ENCODE measurements at regions of chr1 and their contacts with region 1.

Region 1: GRCh38 chr1:165597883-165598675 is 33.0 kb upstream of the MGST3 start:
- DNase-seq: peak; percentile 98
- ATAC-seq: peak; percentile 95
- H3K4me3 Mint-ChIP-seq: peak overlapping the region; percentile 84
- H3K27ac Mint-ChIP-seq: peak overlapping the region; percentile 92
- H3K4me1 Mint-ChIP-seq: peaks cover 33% of the 10 kb centered on the region
- H3K27me3 Mint-ChIP-seq: peaks cover 27% of the 10 kb centered on the region

Region 2: GRCh38 chr1:165257969-165258459 is 340.1 kb before region 1 on chr1:
- CTCF ChIA-PET with region 1: no interaction called
- POLR2A ChIA-PET with region 1: no interaction called
- intact Hi-C with region 1: loop called in 1 of 2 experiments (anchors 1 kb)
- DNase-seq: peak; percentile 73
- ATAC-seq: no peak
- H3K4me3 Mint-ChIP-seq: no peak overlapping the region
- H3K27ac Mint-ChIP-seq: no peak overlapping the region
- H3K4me1 Mint-ChIP-seq: no peaks in the 10 kb centered on the region
- H3K27me3 Mint-ChIP-seq: peaks cover 19% of the 10 kb centered on the region

Region 3: DNA sequence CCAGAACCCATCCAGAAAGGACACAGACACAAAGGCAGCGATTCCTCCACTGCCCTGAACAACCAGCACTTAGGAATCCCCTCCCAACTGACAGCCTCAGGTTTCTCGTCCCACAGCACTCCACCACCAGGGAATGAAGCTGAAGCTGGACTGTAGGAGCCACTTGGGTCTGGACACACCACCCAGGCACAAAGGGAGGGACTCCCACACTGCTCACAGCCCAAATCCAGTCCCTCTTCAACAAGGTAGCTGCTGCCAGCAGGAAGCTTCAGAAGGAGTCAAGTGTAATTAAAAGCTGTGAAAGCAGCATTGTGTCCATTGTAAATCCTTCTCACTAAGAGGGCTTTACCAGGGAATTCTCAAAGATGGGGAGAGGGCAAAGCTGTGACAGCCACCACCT is 270.5 kb before region 1 on chr1:
- CTCF ChIA-PET with region 1: no interaction called
- POLR2A ChIA-PET with region 1: no interaction called
- intact Hi-C with region 1: no loop called
- DNase-seq: no peak
- ATAC-seq: no peak
- H3K4me3 Mint-ChIP-seq: no peak overlapping the region
- H3K27ac Mint-ChIP-seq: no peak overlapping the region
- H3K4me1 Mint-ChIP-seq: no peaks in the 10 kb centered on the region
- H3K27me3 Mint-ChIP-seq: peaks cover 28% of the 10 kb centered on the region

Region 4: GRCh38 chr1:165397944-165398343 is 200.1 kb before region 1 on chr1:
- CTCF ChIA-PET with region 1: interaction called, 150 read pairs
- POLR2A ChIA-PET with region 1: no interaction called
- intact Hi-C with region 1: loop called (anchors 1 kb)
- DNase-seq: peak; percentile 40
- ATAC-seq: peak; percentile 84
- H3K4me3 Mint-ChIP-seq: no peak overlapping the region
- H3K27ac Mint-ChIP-seq: no peak overlapping the region
- H3K4me1 Mint-ChIP-seq: peaks cover 7% of the 10 kb centered on the region
- H3K27me3 Mint-ChIP-seq: peaks cover 40% of the 10 kb centered on the region

Region 5: GRCh38 chr1:165630629-165631341 is 32.7 kb after region 1 on chr1 and contains the start of gene MGST3:
- CTCF ChIA-PET with region 1: interaction called, 6 read pairs
- POLR2A ChIA-PET with region 1: interaction called, 6 read pairs
- intact Hi-C with region 1: loop called (anchors 1 kb)
- DNase-seq: peak; percentile 99
- ATAC-seq: peak; percentile 91
- H3K4me3 Mint-ChIP-seq: no peak within 1 kb of the TSS
- H3K27ac Mint-ChIP-seq: no peak within 1 kb of the TSS
- H3K4me1 Mint-ChIP-seq: peaks cover 17% of the 10 kb centered on the region
- H3K27me3 Mint-ChIP-seq: no peaks in the 10 kb centered on the region
- total RNA-seq, gene MGST3: 49.1 to 52.1 TPM

Region 6: GRCh38 chr1:165768513-165769394 is 170.7 kb after region 1 on chr1 and contains the start of gene TMCO1:
- CTCF ChIA-PET with region 1: no interaction called
- POLR2A ChIA-PET with region 1: interaction called, 4 read pairs
- intact Hi-C with region 1: loop called (anchors 1 kb)
- DNase-seq: peak; percentile 96
- ATAC-seq: peak; percentile 99
- H3K4me3 Mint-ChIP-seq: peak within 1 kb of the TSS; percentile 92
- H3K27ac Mint-ChIP-seq: peak within 1 kb of the TSS; percentile 99
- H3K4me1 Mint-ChIP-seq: peaks cover 54% of the 10 kb centered on the region
- H3K27me3 Mint-ChIP-seq: no peaks in the 10 kb centered on the region
- total RNA-seq, gene TMCO1: 57.7 to 70.5 TPM

Region 7: GRCh38 chr1:165914136-165914798 is 316.2 kb after region 1 on chr1:
- CTCF ChIA-PET with region 1: interaction called, 10 read pairs
- POLR2A ChIA-PET with region 1: no interaction called
- intact Hi-C with region 1: loop called (anchors 1 kb)
- DNase-seq: peak; percentile 74
- ATAC-seq: peak; percentile 88
- H3K4me3 Mint-ChIP-seq: no peak overlapping the region
- H3K27ac Mint-ChIP-seq: no peak overlapping the region
- H3K4me1 Mint-ChIP-seq: peaks cover 2% of the 10 kb centered on the region
- H3K27me3 Mint-ChIP-seq: no peaks in the 10 kb centered on the region

Measured in activated CD4-positive, alpha-beta T cell treated with anti-CD3 and anti-CD28 coated beads for 36 hours (primary cell).